BJ (cell line): ENCODE measurements at regions of chr17 and their contacts with region 1.

Region 1: GRCh38 chr17:17641621-17642409 is 39.4 kb upstream of the RAI1 start:
- DNase-seq: peak; percentile 21
- H3K4me3 ChIP-seq: no peak overlapping the region
- H3K27me3 ChIP-seq: peaks cover 3% of the 10 kb centered on the region; the same call in 1 of the 2 replicates
- CTCF ChIP-seq: peak; percentile 86

Region 2: DNA sequence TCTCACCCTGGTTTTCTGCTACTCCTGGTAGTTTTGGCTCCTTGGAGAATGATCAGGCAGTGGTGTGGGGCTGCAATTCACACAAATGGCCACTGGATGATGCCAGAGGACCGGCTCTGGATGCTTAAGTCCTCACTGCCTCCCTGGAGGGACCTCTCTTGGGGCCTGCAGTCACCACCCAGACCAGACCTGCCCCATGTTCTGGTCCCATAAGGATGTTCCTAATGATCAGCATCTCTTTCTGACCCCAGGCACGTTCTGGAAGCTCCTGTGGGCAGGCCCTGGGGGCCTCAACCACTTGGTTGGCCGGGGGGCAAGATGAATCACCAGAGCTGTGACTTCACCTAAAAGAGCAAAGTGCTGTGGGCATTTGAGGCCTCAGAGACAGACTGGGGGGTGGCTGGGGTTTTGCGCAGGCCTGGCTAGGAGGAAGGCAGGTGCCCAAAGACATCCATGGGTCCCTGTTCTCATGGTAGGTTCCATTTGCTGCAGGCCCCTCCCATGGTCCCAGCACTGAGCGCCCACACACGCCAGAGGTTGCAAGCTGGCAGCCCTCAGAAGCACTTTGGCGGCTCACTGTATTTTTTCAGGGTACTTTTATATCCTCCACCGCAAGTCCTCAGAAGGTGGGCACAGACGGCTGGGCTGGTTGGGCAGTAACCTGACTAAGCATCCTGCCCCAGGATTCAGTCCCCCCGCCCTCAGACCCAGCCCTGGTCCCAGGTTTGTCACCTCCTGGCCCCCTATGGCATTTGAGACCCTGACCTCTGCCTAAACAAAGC is 285.5 kb before region 1 on chr17:
- CTCF ChIA-PET with region 1: interaction called, 208 read pairs
- POLR2A ChIA-PET with region 1: no interaction called
- DNase-seq: no peak
- H3K4me3 ChIP-seq: no peak overlapping the region
- H3K27me3 ChIP-seq: no peaks in the 10 kb centered on the region; the same call in 1 of the 2 replicates
- CTCF ChIP-seq: peak; percentile 100

Region 3: DNA sequence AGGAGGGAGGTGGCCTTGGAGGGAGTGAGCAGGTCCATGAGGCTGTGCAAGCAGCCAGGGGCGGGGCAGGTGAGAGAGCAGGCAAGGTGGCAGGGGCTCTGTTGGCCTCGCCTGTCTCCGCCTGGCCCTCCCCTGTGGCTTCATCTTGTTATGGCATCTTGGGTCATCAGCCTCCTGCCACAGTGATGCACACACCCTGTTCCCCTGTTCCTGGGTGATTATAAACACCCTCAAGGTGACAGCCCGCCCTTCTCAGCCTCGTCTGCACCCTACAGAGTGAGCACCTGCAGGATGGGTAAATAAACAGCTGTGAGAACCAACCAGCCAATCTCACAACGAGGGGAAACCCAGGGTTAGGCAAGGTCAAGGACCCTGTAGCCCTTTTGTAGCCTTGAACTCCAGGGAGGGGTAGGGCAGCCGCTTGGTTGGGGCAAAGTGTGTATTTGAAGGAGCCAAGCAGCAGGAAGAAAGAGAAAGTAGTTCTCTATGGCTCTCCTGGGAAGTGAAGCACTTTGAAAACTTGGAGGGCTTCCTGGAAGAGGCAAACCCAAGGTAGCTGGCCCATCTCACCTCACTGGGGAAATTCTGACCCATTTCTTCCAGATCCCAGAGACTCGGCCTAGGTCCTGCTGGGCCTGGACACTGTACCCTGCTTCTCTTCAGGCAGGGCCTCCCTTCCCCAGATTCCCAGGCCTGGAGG is 278.0 kb before region 1 on chr17:
- CTCF ChIA-PET with region 1: interaction called, 208 read pairs
- POLR2A ChIA-PET with region 1: no interaction called
- DNase-seq: no peak
- H3K4me3 ChIP-seq: no peak overlapping the region
- H3K27me3 ChIP-seq: no peaks in the 10 kb centered on the region; the same call in none of the 2 replicates
- CTCF ChIP-seq: no peak

Region 4: DNA sequence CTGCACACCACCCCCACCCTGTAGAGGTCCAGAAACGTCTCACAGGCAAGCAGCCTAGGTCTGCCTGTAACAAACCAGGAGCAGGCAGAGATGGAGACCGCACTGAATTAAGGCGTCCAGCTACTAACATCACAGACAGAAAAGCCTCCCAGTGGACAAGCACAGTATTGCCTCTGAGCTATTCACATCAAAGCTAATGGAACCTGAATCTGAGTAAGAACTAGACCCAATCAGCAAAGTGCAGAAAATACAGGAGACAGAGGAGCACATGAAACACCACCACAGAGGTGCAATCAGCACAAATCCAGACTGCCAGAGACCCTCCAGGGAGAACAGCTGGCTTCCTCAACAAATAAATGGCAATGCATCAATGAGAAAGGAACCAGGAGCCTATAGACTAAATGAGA is 28.1 kb before region 1 on chr17:
- CTCF ChIA-PET with region 1: interaction called, 16 read pairs
- POLR2A ChIA-PET with region 1: no interaction called
- DNase-seq: no peak
- H3K4me3 ChIP-seq: no peak overlapping the region
- H3K27me3 ChIP-seq: no peaks in the 10 kb centered on the region
- CTCF ChIP-seq: peak; percentile 82

Region 5: DNA sequence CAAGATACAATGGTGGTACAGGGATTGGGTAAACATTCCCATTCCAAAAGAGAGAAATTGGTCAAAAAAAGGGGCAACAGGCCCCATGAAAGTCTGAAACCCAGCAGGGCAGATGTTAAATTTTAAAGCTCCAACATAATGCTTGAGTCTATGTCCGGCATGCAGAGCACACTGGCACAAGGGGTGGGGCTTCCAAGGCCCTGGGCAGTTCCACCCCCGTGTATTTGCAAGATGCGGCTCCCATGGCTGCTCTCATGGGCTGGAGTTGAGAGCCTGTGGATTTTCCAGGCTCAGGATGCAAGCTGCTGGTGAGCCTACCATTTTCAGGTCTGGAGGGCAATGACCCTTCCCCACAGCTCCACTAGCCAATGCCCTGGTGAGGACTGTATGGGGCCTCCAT is 11.5 kb after region 1 on chr17:
- CTCF ChIA-PET with region 1: interaction called, 23 read pairs
- POLR2A ChIA-PET with region 1: no interaction called
- DNase-seq: no peak
- H3K4me3 ChIP-seq: no peak overlapping the region
- H3K27me3 ChIP-seq: 0 out of 2 replicates have a peak, but pooled peaks cover 2% of the 10 kb centered on the region
- CTCF ChIP-seq: no peak

Region 6: GRCh38 chr17:17694169-17695081 is 52.6 kb after region 1 on chr17:
- CTCF ChIA-PET with region 1: no interaction called
- POLR2A ChIA-PET with region 1: no interaction called
- DNase-seq: no peak
- H3K4me3 ChIP-seq: peak overlapping the region; percentile 55
- H3K27me3 ChIP-seq: no peaks in the 10 kb centered on the region
- CTCF ChIP-seq: no peak

Region 7: DNA sequence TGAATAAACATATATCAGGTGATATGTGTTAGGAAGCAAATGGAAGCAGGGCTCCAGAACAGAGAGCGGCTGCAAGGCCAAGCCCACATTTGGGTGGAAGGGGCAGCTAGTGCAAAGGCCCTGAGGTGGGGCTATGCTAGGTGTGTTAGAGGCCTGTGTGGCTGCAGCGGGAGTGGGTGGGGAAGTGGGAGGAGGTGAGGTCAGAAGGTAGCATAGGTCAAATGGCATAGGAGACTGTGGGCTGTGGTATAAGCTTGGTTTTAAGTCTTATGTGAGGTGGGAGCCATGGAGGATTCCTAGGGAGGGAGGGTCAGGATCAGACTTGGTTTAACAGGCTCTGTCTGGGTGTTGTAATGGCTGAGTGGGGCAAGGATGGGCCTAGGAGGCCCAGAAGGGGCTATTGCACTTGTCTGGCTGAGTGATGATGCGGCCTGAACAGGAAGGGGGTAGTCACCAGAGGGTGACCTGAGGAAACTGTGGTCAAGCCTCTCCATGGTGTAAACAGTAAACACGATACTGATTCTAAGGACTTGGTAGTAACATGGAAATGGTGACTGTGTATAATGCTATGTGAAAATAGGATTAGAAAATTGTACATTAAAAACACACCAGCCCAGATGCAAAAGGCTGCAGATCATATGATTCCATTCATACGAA is 70.6 kb after region 1 on chr17:
- CTCF ChIA-PET with region 1: no interaction called
- POLR2A ChIA-PET with region 1: no interaction called
- DNase-seq: peak; percentile 76
- H3K4me3 ChIP-seq: no peak overlapping the region
- H3K27me3 ChIP-seq: no peaks in the 10 kb centered on the region
- CTCF ChIP-seq: no peak

Region 8: GRCh38 chr17:17757391-17757791 is 115.6 kb after region 1 on chr17:
- CTCF ChIA-PET with region 1: no interaction called
- POLR2A ChIA-PET with region 1: no interaction called
- DNase-seq: no peak
- H3K4me3 ChIP-seq: no peak overlapping the region
- H3K27me3 ChIP-seq: no peaks in the 10 kb centered on the region
- CTCF ChIP-seq: no peak